ENCODE measurements at regions of chr1 and their contacts with region 1.

Region 1: GRCh38 chr1:156338180-156338973 is at the starts of genes CCT3 and TSACC:
- DNase-seq: peak; percentile 99
- ATAC-seq: peak; percentile 96
- H3K4me3 Mint-ChIP-seq: peak within 1 kb of the TSS; percentile 98
- H3K27ac Mint-ChIP-seq: peak within 1 kb of the TSS; percentile 96
- H3K4me1 Mint-ChIP-seq: peaks cover 29% of the 10 kb centered on the region
- H3K27me3 Mint-ChIP-seq: no peaks in the 10 kb centered on the region
- total RNA-seq, gene CCT3: 297 to 406 TPM
- total RNA-seq, gene TSACC: 0.25 to 0.83 TPM

Region 2: GRCh38 chr1:155305881-155306391 is 1032.4 kb before region 1 on chr1:
- CTCF ChIA-PET with region 1: no interaction called
- POLR2A ChIA-PET with region 1: no interaction called
- intact Hi-C with region 1: no loop called
- DNase-seq: no peak
- ATAC-seq: no peak
- H3K4me3 Mint-ChIP-seq: no peak overlapping the region
- H3K27ac Mint-ChIP-seq: peak overlapping the region; percentile 47
- H3K4me1 Mint-ChIP-seq: peaks cover 21% of the 10 kb centered on the region
- H3K27me3 Mint-ChIP-seq: no peaks in the 10 kb centered on the region

Region 3: DNA sequence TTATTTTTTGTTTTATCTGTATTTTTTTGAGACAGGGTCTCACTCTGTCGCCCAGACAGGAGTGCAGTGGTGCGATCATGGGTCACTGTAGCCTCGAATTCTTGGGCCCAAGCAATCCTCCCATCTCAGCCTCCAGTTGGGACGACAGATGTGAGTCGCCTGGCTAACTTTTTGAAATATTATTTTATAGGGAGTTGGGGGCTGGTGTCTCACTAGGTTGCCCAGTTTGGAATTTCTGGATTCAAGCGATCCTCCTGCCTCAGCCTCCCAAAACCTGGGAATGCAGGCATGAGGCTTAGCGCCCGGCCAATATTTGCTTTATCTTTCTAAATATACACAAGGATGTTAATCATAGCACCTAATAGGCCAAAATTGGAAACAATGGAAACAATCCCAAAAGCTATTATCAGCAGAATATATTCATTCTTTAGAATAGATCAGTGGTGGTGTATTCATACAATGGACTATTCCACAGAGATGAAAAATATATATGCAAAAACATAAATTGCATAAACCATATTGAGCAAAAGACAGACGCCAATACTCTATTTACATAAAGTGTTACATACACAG is 593.6 kb before region 1 on chr1:
- CTCF ChIA-PET with region 1: no interaction called
- POLR2A ChIA-PET with region 1: no interaction called
- intact Hi-C with region 1: loop called in 1 of 2 experiments (anchors 1 kb)
- DNase-seq: no peak
- ATAC-seq: no peak
- H3K4me3 Mint-ChIP-seq: peak overlapping the region; percentile 90
- H3K27ac Mint-ChIP-seq: peak overlapping the region; percentile 78
- H3K4me1 Mint-ChIP-seq: peaks cover 4% of the 10 kb centered on the region
- H3K27me3 Mint-ChIP-seq: no peaks in the 10 kb centered on the region

Region 4: GRCh38 chr1:156054500-156055280 is 283.7 kb before region 1 on chr1 and contains the start of gene LAMTOR2:
- CTCF ChIA-PET with region 1: no interaction called
- POLR2A ChIA-PET with region 1: no interaction called
- intact Hi-C with region 1: loop called in 1 of 2 experiments (anchors 1 kb)
- DNase-seq: peak; percentile 98
- ATAC-seq: peak; percentile 82
- H3K4me3 Mint-ChIP-seq: peak within 1 kb of the TSS; percentile 92
- H3K27ac Mint-ChIP-seq: peak within 1 kb of the TSS; percentile 88
- H3K4me1 Mint-ChIP-seq: peaks cover 18% of the 10 kb centered on the region
- H3K27me3 Mint-ChIP-seq: no peaks in the 10 kb centered on the region
- total RNA-seq, gene LAMTOR2: 26.1 to 50.3 TPM

Region 5: DNA sequence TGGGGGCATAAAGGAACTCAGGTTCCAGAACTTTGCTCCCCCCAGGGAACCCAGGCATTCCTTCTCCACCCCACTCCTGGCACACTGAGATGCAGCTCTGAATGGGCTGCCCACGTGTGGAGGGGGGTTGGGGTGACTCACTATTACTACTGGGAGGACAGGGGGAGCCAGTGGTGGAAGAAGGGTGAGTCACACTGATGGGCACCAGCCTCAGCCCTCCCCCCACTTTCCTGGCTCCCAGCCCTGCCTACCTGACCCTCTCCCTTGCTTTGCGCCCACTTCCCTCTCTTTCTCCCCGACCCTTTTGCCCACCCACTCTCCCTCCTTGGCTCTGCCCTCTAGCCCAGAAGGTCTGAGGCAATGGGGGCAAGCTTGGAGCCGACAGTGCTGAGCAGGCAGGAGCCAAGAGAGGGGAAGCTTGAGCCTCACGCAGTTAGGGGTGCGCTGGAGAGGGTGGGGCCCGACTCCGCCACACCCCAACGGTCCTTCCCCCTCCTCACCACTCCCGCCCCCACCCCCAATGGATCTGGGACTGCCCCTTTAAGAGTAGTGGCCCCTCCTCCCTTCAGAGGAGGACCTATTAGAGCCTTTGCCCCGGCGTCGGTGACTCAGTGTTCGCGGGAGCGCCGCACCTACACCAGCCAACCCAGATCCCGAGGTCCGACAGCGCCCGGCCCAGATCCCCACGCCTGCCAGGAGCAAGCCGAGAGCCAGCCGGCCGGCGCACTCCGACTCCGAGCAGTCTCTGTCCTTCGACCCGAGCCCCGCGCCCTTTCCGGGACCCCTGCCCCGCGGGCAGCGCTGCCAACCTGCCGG is 224.1 kb before region 1 on chr1 and contains the start of gene LMNA:
- CTCF ChIA-PET with region 1: no interaction called
- POLR2A ChIA-PET with region 1: no interaction called
- intact Hi-C with region 1: no loop called
- DNase-seq: peak; percentile 90
- ATAC-seq: peak; percentile 91
- H3K4me3 Mint-ChIP-seq: peak within 1 kb of the TSS; percentile 93
- H3K27ac Mint-ChIP-seq: peak within 1 kb of the TSS; percentile 83
- H3K4me1 Mint-ChIP-seq: peaks cover 26% of the 10 kb centered on the region
- H3K27me3 Mint-ChIP-seq: peaks cover 19% of the 10 kb centered on the region
- total RNA-seq, gene LMNA: 184 to 218 TPM

Region 6: GRCh38 chr1:156146020-156146768 is 192.2 kb before region 1 on chr1:
- CTCF ChIA-PET with region 1: interaction called, 3 read pairs
- POLR2A ChIA-PET with region 1: no interaction called
- intact Hi-C with region 1: loop called in 1 of 2 experiments (anchors 5 kb)
- DNase-seq: peak; percentile 67
- ATAC-seq: peak; percentile 82
- H3K4me3 Mint-ChIP-seq: peak overlapping the region; percentile 37
- H3K27ac Mint-ChIP-seq: peak overlapping the region; percentile 85
- H3K4me1 Mint-ChIP-seq: peaks cover 46% of the 10 kb centered on the region
- H3K27me3 Mint-ChIP-seq: no peaks in the 10 kb centered on the region

Region 7: GRCh38 chr1:156356875-156357534 is 18.6 kb after region 1 on chr1:
- CTCF ChIA-PET with region 1: interaction called, 6 read pairs
- POLR2A ChIA-PET with region 1: no interaction called
- intact Hi-C with region 1: loop called in 1 of 2 experiments (anchors 1 kb)
- DNase-seq: peak; percentile 87
- ATAC-seq: peak; percentile 95
- H3K4me3 Mint-ChIP-seq: no peak overlapping the region
- H3K27ac Mint-ChIP-seq: no peak overlapping the region
- H3K4me1 Mint-ChIP-seq: peaks cover 8% of the 10 kb centered on the region
- H3K27me3 Mint-ChIP-seq: peaks cover 6% of the 10 kb centered on the region

Region 8: GRCh38 chr1:156767101-156767878 is 428.9 kb after region 1 on chr1 and contains the start of gene PRCC:
- CTCF ChIA-PET with region 1: no interaction called
- POLR2A ChIA-PET with region 1: no interaction called
- intact Hi-C with region 1: loop called in 1 of 2 experiments (anchors 1 kb)
- DNase-seq: peak; percentile 98
- ATAC-seq: peak; percentile 96
- H3K4me3 Mint-ChIP-seq: no peak within 1 kb of the TSS
- H3K27ac Mint-ChIP-seq: no peak within 1 kb of the TSS
- H3K4me1 Mint-ChIP-seq: peaks cover 35% of the 10 kb centered on the region
- H3K27me3 Mint-ChIP-seq: no peaks in the 10 kb centered on the region
- total RNA-seq, gene PRCC: 80.4 to 110 TPM